GM10248 (cell line): ENCODE measurements at regions of chr10 and their contacts with region 1.

Region 1: DNA sequence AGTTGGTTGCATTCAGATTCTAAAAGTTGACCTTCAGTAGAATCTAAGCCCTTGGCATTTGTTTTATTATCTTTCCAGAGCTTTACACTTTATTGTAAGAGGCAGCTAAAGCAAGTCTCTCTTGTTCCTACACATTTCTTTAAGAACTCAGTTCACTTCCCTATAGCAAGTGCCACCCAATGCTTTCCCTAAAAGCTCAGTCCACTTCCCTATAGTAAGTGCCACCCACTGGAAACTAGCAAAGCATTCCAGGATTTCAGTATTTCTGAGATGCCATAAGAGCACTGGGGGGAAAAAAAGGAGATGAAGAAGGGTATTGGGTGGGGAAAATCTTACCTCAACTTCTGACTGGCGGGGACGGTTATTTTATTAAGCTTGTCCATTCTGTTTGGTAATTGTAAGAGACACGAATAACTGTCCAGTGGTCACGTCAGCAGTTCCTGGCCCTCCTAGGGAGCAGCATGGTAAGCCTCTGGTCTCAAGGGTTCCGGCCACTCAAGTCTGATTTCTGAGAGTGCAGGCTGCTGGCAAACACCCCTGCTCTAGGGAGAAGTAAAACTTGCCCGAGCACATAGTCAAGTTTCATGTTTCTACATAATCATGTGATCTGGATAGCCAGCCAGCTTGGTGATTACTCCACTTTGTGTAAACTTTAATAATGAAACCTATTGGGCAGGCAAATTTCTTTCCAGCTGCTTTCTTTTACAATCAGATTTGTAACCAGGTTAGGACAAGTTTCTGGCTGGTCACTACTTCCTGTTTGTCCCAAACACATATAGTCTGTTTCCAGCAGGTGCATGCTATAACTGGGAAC is at the start of gene BLNK:
- DNase-seq: peak; percentile 76
- CTCF ChIP-seq: no peak

Region 2: DNA sequence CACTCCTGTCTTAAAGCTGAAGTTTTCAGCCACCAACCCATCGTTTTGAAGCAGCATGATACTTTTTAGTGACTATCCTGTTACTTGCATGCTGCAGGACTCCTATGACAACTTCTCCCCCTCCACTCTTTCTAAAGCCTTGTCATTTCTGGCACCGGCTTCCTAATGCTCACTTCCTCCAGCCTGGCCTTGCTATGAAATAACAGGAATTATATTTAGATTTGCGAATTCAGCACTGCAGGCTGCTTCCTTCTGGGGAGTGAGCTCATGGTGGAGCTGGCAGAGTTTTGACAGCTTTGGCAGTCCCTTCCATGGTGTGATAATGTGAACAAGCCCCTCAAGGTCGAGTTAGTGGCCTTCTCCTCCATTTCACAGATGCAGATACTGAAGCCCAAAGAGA is 13.3 kb before region 1 on chr10:
- CTCF ChIA-PET with region 1: interaction called, 13 read pairs
- POLR2A ChIA-PET with region 1: interaction called, 4 read pairs
- DNase-seq: no peak
- CTCF ChIP-seq: no peak

Region 3: DNA sequence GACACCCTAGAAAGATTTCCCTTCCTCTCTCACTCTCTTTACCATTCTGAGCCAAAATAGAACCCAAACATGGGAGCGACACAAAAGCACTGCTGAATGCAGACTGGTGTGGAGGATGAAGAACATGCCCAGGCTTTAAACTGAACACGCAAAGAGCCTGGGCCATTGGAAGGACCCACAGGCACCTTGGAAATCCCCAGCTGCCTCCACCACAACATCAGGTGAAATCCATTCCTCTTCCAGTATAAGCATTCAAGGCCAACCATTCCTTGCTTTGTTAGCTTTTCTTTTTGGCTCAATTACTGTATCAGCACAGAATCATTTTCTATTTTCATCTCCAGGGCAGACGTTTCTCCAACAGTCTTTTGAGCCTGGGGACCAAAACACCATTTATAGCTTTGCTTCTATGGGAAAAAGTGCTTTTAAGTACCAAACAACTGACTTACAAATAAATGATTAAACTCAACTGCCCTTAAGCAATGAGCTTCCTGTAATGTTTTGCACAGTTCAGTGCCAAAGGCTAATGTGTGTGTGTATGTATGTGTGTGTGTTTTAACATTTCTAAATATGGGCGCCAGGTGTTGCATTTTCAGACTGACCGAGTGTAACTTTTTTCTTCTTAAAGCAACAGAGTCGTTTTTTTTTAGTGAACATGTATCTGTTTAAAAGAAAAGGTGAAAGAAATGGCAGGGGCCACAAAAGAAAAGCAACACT is 16.3 kb after region 1 on chr10:
- CTCF ChIA-PET with region 1: interaction called, 41 read pairs
- POLR2A ChIA-PET with region 1: interaction called, 9 read pairs
- DNase-seq: peak; percentile 46
- CTCF ChIP-seq: no peak

Region 4: GRCh38 chr10:96416643-96417042 is 145.4 kb after region 1 on chr10:
- CTCF ChIA-PET with region 1: no interaction called
- POLR2A ChIA-PET with region 1: no interaction called
- DNase-seq: no peak
- CTCF ChIP-seq: no peak